CD4-positive, alpha-beta memory T cell (primary cell): ENCODE measurements at regions of chr15 and their contacts with region 1.

Region 1: GRCh38 chr15:94163999-94164807 is 67.2 kb upstream of the MCTP2 start:
- DNase-seq: peak in 4 of 5 donors; percentile 20 to 41 (median 33)
- H3K4me3 ChIP-seq: no peak overlapping the region
- H3K4me3 Mint-ChIP-seq: no peak overlapping the region
- H3K27ac ChIP-seq: no peak overlapping the region
- H3K27ac Mint-ChIP-seq: no peak overlapping the region
- H3K4me1 ChIP-seq: no peaks in the 10 kb centered on the region
- H3K4me1 Mint-ChIP-seq: no peaks in the 10 kb centered on the region
- H3K27me3 ChIP-seq: no peaks in the 10 kb centered on the region
- H3K27me3 Mint-ChIP-seq: peaks cover 2 to 4% of the 10 kb centered on the region in 2 donors

Region 2: GRCh38 chr15:94230956-94231722 is 66.9 kb after region 1 on chr15 and contains the start of gene MCTP2:
- CTCF ChIA-PET with region 1: interaction called, 7 read pairs
- POLR2A ChIA-PET with region 1: no interaction called
- intact Hi-C with region 1: loop called (anchors 2 kb)
- DNase-seq: peak; percentile 79 to 86 (median 81)
- H3K4me3 ChIP-seq: peak within 1 kb of the TSS; percentile 64 to 85
- H3K4me3 Mint-ChIP-seq: peak within 1 kb of the TSS; percentile 92 to 97 (median 95)
- H3K27ac ChIP-seq: peak within 1 kb of the TSS; percentile 71
- H3K27ac Mint-ChIP-seq: peak within 1 kb of the TSS; percentile 91 to 98 (median 97)
- H3K4me1 ChIP-seq: peaks cover 36% of the 10 kb centered on the region
- H3K4me1 Mint-ChIP-seq: peaks cover 30 to 62% (median 46%) of the 10 kb centered on the region in 4 donors
- H3K27me3 ChIP-seq: no peaks in the 10 kb centered on the region
- H3K27me3 Mint-ChIP-seq: no peaks in the 10 kb centered on the region
- total RNA-seq, gene MCTP2: 18.3 to 19.6 TPM

Region 3: DNA sequence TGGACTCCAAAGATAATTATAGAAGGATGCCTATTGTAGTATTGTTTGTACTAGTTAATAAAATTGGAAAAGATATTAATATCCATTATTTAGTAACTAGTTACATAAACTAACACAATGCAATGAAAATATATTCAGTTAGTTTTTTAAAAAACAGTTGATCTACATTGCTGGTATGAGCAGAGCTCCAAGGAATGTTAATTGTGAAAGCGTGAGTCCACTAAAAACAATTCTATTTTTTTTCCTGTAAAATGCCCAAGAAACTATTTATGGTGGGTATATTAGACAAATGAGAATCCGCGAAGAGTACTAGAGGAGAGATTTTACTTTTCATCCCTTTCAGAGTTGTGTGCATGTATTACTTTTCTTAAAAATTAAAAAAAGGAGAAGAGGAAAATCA is 171.4 kb after region 1 on chr15:
- CTCF ChIA-PET with region 1: interaction called, 12 read pairs
- POLR2A ChIA-PET with region 1: no interaction called
- intact Hi-C with region 1: no loop called
- DNase-seq: no peak
- H3K4me3 ChIP-seq: no peak overlapping the region
- H3K4me3 Mint-ChIP-seq: no peak overlapping the region
- H3K27ac ChIP-seq: no peak overlapping the region
- H3K27ac Mint-ChIP-seq: no peak overlapping the region
- H3K4me1 ChIP-seq: no peaks in the 10 kb centered on the region
- H3K4me1 Mint-ChIP-seq: no peaks in the 10 kb centered on the region
- H3K27me3 ChIP-seq: no peaks in the 10 kb centered on the region
- H3K27me3 Mint-ChIP-seq: no peaks in the 10 kb centered on the region